GM10248 (cell line): ENCODE measurements at regions of chr14 and their contacts with region 1.

Region 1: DNA sequence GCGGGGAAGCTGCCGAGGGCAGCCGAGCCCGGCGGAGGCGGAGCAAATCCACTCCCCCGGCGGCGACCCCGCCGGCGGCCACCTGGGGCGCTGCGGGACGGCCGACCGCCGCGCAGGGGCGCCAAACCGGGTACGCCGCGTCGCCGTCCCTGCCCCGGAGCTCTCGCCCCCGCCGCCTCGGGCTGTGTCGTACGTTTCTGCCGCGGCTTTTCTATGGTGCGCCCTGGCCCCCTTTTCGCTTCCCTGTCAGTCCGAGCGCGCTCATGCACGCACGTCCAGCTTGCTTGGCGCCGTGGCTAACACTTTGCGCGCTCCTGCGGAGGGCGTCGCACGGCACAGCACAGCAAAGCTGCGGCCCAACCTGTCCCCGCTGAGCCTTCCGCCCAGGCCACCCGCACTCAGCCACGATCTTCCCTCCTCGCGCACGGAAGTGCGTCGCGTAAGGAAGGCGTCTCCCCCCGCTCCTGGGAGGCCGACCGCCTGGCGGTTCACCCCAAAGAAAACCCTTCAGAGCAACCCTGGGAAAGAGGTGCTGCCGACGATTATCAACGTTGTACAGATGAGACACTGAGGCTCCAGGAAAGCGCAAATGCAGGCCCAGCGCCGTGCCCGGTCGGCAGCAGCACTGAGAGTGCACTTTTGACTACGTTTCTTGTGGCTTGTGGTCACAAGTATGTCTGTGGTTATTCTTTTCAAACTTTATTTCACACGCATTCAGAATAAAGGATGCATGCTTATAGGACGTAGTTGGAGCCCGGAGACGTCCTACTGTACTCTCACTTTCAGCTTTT is at the start of gene HECTD1:
- DNase-seq: peak; percentile 93
- CTCF ChIP-seq: peak; percentile 78

Region 2: DNA sequence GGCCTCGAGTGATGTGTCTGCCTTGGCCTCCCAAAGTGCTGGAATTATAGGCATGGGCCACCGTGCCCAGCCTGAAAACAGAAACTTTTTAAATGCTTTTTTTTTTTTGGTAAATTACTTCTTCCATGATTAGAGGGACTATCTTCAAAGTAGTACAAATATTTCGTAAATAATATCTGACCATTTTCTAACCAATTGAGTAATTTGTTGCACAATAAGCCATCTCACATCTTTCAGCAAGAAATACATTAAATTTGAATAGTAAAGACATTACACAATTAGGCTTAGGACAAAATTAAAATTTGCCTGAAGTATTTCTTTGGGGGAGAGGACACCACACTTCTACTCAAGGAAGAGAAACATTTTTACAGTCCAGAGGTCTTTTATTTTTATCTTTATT is 97.1 kb before region 1 on chr14:
- CTCF ChIA-PET with region 1: no interaction called
- POLR2A ChIA-PET with region 1: no interaction called
- DNase-seq: no peak
- CTCF ChIP-seq: no peak

Region 3: DNA sequence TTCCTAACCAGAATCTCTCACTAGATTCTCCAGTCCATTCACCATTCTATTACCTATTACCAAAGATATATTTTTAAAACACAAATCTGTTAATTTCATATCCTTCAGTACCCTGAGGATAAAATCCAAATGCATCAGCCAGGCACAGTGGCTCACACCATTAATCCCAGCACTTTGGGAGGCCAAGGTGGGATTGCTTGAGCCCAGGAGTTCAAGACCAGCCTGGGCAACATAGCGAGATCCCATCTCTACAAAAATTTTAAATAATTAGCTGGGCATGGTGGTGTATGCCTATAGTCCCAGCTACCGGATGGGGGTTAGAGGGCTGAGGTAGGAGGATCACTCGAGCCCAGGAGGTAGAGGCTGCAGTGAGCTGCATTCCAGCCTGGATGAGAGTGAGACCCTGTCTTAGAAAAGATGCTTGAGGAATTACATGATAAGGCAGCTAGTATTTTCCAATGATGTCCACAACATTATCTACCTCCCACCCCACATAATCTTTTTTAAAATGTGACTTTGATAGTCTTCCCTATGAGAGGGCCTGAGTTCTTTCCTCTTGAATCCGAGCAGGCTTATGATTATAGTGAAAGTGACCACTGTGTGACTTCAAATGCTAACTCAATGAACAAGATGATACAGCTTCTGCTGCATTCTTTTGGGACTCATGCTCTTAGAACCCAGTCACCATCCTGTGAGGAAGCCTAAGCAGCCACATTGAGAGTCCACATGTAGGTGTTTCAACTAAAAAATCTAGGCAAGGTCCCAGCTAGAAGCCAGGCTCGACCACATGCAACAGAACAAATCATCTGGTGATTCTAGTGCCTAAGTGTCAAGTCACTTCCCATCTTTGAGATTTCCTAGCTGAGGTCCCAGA is 18.4 kb before region 1 on chr14:
- CTCF ChIA-PET with region 1: interaction called, 18 read pairs
- POLR2A ChIA-PET with region 1: interaction called, 8 read pairs
- DNase-seq: no peak
- CTCF ChIP-seq: no peak

Region 4: GRCh38 chr14:31196839-31197492 is 11.0 kb before region 1 on chr14:
- CTCF ChIA-PET with region 1: interaction called, 35 read pairs
- POLR2A ChIA-PET with region 1: interaction called, 4 read pairs
- DNase-seq: no peak
- CTCF ChIP-seq: no peak

Region 5: GRCh38 chr14:31229638-31230229 is 21.8 kb after region 1 on chr14:
- CTCF ChIA-PET with region 1: interaction called, 14 read pairs
- POLR2A ChIA-PET with region 1: no interaction called
- DNase-seq: no peak
- CTCF ChIP-seq: no peak

Region 6: DNA sequence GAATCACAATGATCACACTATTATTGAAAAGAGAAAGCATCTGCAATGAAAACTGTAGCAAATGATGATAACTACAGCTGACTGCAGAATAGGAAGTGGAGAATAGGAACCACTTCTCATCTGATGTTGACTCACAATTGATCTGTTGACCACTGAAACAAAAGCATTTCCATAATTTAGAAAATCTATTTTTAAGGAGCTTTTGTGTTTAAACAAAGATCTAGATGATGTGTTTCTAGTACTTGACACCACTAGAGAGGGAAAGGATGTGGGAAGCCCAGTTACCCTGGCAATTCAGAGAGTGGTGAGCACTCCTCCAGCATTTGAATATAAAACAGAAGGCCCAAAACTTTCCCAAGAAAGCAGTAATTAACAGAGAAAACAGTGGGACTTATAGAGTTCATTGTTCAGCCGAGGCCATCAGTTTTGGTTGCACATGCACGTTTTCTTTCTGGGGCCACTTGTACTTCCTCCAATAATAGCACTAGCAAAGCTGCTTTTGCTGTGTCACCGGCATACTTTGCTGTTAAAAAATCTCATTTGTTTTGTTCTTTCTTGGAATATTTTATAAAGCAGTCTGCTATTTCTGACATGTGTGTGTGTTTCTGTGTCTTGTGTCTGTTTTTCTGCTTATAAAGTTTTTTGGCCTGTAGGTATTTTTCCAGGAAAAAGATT is 75.8 kb after region 1 on chr14:
- CTCF ChIA-PET with region 1: no interaction called
- POLR2A ChIA-PET with region 1: no interaction called
- DNase-seq: no peak
- CTCF ChIP-seq: no peak

Region 7: GRCh38 chr14:31510222-31510621 is 302.3 kb after region 1 on chr14:
- CTCF ChIA-PET with region 1: no interaction called
- POLR2A ChIA-PET with region 1: no interaction called
- DNase-seq: peak; percentile 23
- CTCF ChIP-seq: peak; percentile 48